AG04450 (cell line): ENCODE measurements at regions of chr13 and their contacts with region 1.

Region 1: DNA sequence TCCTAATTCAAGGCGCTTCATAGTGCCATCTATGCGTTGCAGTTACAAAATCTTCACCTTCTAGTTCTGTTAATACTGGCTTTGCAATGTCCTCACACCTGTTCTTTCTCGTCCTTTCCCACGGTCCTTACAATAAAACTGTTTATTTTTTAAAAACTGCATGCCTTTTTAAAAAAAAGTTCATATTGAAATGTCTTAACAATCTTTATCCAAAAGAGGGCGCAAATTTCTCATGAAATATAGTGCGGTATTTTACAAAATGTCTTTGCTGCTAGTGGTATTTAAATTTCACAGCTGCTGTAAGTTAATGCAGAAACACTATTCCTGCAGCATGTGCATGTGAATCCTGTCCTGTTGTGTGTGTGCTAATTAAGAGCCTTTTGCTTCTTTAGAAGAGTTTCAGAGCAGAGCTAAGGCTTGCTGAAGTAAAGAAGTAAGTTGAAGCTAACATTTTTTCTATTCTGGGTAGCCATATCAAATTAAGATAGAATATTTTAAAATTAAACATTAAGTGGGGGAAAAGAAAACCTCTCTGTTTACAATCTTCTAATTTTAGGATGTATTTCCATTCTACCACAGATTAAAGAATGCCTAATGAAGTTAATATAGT is 15.8 kb upstream of the CLDN10 start:
- DNase-seq: no peak
- H3K4me3 ChIP-seq: no peak overlapping the region
- H3K27ac ChIP-seq: no peak overlapping the region
- H3K27me3 ChIP-seq: no peaks in the 10 kb centered on the region
- CTCF ChIP-seq: peak; percentile 49

Region 2: DNA sequence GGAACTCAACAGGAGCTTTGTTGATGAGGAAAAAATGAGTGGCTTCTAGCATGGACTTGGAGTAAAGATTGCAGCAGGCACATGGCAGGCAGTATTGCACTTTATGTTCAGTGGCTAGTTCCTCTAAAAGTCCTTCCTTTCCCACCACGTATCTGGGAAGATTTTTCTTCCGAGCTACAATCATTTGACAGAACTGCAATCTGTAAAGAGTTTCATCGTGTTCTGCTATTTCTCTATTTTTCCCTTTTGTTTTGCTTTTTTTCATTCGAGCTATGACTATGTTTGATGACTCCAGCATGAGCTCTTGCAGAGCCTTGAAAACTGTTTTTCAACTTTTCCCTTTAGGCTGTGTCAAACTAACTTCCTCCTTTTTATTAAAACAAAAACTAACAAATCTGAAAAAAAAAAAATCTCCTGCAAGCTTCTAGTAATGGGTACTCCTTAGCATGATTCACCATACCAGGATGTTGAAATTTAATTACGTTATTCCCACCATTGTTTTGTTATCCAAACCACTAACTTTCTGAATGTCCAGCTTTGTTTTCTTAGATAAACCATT is 28.1 kb after region 1 on chr13:
- CTCF ChIA-PET with region 1: interaction called, 20 read pairs
- POLR2A ChIA-PET with region 1: interaction called, 13 read pairs
- DNase-seq: no peak
- H3K4me3 ChIP-seq: no peak overlapping the region
- H3K27ac ChIP-seq: no peak overlapping the region
- H3K27me3 ChIP-seq: peaks cover 3% of the 10 kb centered on the region
- CTCF ChIP-seq: no peak

Region 3: DNA sequence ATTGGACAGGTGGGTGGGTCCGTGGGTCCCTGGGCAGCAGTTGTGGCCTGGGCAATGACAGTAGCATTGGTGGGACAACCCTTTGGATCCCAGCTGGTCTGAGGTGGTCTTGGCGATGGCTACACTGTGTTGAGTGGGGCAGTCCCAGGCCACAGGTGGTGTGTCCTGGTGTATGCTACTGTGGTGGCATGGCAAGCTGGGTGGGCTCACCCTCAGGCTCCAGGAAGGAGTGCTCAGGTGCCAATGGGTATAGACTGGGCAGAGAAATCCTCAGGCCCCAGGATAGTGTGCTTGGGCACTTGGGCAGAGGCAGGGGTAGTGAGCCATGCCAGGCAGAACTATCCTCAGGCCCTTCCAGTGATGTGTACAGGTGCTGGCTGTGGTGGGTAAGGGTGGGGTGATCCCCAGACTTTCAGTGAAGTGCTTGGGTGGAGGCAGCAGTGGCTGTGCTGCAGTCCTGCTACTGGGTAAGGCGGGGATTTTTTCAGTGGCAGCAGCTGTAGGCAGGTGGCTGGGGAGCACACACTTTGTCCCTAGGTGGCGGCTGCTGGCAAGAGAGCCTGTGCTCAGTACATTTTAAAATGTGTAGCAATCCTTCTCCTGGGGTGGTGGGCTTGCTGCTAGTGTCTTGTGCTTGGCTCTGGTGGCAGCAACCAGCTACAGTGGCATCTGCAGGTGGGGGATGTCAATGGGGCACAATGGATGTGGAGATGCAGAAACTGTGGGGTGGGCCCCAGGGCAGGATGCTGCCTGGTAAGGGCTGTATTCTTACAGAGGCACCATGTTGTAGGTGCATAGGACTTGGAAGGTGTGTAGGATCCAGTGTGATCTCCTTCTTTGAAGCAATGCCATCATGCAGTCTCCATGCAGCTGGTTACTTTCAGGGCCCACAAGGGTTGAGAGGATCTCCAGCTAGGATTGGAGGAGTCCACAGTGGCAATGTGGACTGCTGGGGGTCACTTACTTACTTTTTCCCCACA is 205.1 kb after region 1 on chr13:
- CTCF ChIA-PET with region 1: no interaction called
- POLR2A ChIA-PET with region 1: no interaction called
- DNase-seq: no peak
- H3K4me3 ChIP-seq: no peak overlapping the region
- H3K27ac ChIP-seq: no peak overlapping the region
- H3K27me3 ChIP-seq: no peaks in the 10 kb centered on the region
- CTCF ChIP-seq: no peak